Activated CD4-positive, alpha-beta memory T cell treated with anti-CD3 and anti-CD28 coated beads for 36 hours (primary cell): ENCODE measurements at regions of chr5 and their contacts with region 1.

Region 1: GRCh38 chr5:119355685-119356611 is at the start of gene TNFAIP8:
- DNase-seq: peak; percentile 90
- H3K4me3 Mint-ChIP-seq: peak within 1 kb of the TSS; percentile 99
- H3K27ac Mint-ChIP-seq: peak within 1 kb of the TSS; percentile 90
- H3K4me1 Mint-ChIP-seq: peaks cover 71% of the 10 kb centered on the region
- H3K27me3 Mint-ChIP-seq: no peaks in the 10 kb centered on the region
- total RNA-seq, gene TNFAIP8: 153 to 159 TPM

Region 2: GRCh38 chr5:119009131-119009530 is 346.8 kb before region 1 on chr5:
- CTCF ChIA-PET with region 1: no interaction called
- POLR2A ChIA-PET with region 1: no interaction called
- intact Hi-C with region 1: no loop called
- DNase-seq: no peak
- H3K4me3 Mint-ChIP-seq: no peak overlapping the region
- H3K27ac Mint-ChIP-seq: no peak overlapping the region
- H3K4me1 Mint-ChIP-seq: no peaks in the 10 kb centered on the region
- H3K27me3 Mint-ChIP-seq: no peaks in the 10 kb centered on the region

Region 3: DNA sequence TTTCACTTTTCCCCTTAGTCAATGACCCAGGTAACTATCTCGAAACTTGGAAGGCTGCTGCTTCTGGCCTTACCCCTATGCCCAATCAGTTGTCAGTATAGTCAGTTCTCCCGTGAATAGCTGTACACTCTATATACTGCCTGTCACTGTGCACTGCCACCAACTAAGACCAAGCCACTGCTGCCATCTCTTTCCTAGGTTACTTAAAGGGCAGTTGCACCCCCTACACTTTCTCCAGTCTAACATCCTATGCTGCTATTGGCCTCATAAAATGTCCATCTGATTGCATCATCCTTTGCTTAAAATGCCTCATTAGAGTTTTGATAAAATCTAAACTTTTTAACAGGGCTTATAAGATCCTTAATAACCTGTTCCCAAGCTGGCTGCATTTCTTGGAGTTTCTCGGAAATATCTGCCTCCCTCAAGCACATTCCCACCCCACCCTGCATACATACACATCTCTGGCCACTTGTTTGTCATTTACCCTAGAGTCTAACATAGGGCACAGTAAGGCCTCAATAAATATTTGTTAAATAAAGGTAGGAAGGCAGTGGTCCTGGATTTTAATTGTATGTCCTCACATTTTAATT is 32.9 kb before region 1 on chr5:
- CTCF ChIA-PET with region 1: interaction called, 3 read pairs
- POLR2A ChIA-PET with region 1: interaction called, 504 read pairs
- intact Hi-C with region 1: no loop called
- DNase-seq: no peak
- H3K4me3 Mint-ChIP-seq: peak overlapping the region; percentile 68
- H3K27ac Mint-ChIP-seq: peak overlapping the region; percentile 94
- H3K4me1 Mint-ChIP-seq: peaks cover 95% of the 10 kb centered on the region
- H3K27me3 Mint-ChIP-seq: no peaks in the 10 kb centered on the region

Region 4: GRCh38 chr5:119367502-119368237 is 11.7 kb after region 1 on chr5:
- CTCF ChIA-PET with region 1: interaction called, 19 read pairs
- POLR2A ChIA-PET with region 1: interaction called, 66 read pairs
- intact Hi-C with region 1: loop called (anchors 1 kb)
- DNase-seq: no peak
- H3K4me3 Mint-ChIP-seq: peak overlapping the region; percentile 55
- H3K27ac Mint-ChIP-seq: peak overlapping the region; percentile 90
- H3K4me1 Mint-ChIP-seq: peaks cover 83% of the 10 kb centered on the region
- H3K27me3 Mint-ChIP-seq: no peaks in the 10 kb centered on the region